WTC11 (cell line): ENCODE measurements at regions of chr5 and their contacts with region 1.

Region 1: GRCh38 chr5:172714491-172715421 is 56.2 kb downstream of the DUSP1 start:
- DNase-seq: peak; percentile 85
- ATAC-seq: peak; percentile 80
- H3K4me3 Mint-ChIP-seq: no peak overlapping the region
- H3K27ac Mint-ChIP-seq: no peak overlapping the region
- H3K4me1 Mint-ChIP-seq: peaks cover 2% of the 10 kb centered on the region; the same call in 1 of the 2 replicates
- H3K27me3 Mint-ChIP-seq: peaks cover 13% of the 10 kb centered on the region
- CTCF ChIP-seq: peak; percentile 87

Region 2: GRCh38 chr5:172697123-172698121 is 17.3 kb before region 1 on chr5:
- CTCF ChIA-PET with region 1: interaction called, 28 read pairs
- POLR2A ChIA-PET with region 1: interaction called, 3 read pairs
- DNase-seq: peak; percentile 89
- ATAC-seq: peak; percentile 60
- H3K4me3 Mint-ChIP-seq: peak overlapping the region; percentile 66
- H3K27ac Mint-ChIP-seq: no peak overlapping the region
- H3K4me1 Mint-ChIP-seq: peaks cover 47% of the 10 kb centered on the region
- H3K27me3 Mint-ChIP-seq: peaks cover 32% of the 10 kb centered on the region
- CTCF ChIP-seq: peak; percentile 85

Region 3: GRCh38 chr5:172733131-172733973 is 18.6 kb after region 1 on chr5:
- CTCF ChIA-PET with region 1: interaction called, 10 read pairs
- POLR2A ChIA-PET with region 1: no interaction called
- DNase-seq: no peak
- ATAC-seq: peak; percentile 33
- H3K4me3 Mint-ChIP-seq: no peak overlapping the region
- H3K27ac Mint-ChIP-seq: no peak overlapping the region
- H3K4me1 Mint-ChIP-seq: no peaks in the 10 kb centered on the region
- H3K27me3 Mint-ChIP-seq: peaks cover 9% of the 10 kb centered on the region; the same call in 1 of the 2 replicates
- CTCF ChIP-seq: no peak

Region 4: DNA sequence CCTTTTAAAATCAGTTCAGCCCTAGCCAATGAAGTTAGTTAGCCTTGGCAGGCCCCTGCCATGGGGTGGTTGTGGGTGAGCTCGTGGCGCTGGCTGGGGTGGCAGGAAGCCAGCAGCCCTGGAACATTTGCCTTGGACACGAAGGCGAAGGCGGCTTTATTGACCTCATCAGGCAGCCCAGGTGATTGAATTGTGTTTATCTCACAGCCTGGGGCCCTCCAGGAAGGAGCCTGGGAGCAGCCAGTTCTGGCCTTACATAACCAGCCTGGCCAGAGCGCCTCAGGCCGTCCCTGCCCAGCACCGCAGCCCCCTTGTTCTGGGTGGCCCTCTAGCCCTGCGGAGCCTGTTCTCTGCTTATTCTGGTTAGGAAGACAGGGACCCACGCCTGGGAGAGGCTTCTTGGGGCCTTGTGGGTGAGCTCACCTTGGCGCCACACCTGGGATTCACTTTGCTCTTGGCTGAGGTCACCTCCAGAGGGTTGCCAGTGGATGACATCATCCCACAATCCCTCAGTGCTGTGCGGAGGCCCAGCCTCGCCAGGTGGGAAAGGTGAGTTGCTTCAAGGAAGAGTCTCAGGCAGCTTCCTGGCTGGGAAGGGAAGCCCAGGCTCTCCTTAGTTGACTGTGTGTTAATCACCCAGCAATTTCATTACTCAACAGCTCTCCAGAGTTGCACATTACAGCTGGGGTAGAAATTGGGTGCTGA is 190.0 kb after region 1 on chr5:
- CTCF ChIA-PET with region 1: interaction called, 22 read pairs
- POLR2A ChIA-PET with region 1: no interaction called
- DNase-seq: no peak
- ATAC-seq: no peak
- H3K4me3 Mint-ChIP-seq: no peak overlapping the region
- H3K27ac Mint-ChIP-seq: peak overlapping the region; percentile 82
- H3K4me1 Mint-ChIP-seq: peaks cover 21% of the 10 kb centered on the region
- H3K27me3 Mint-ChIP-seq: no peaks in the 10 kb centered on the region
- CTCF ChIP-seq: no peak

Region 5: DNA sequence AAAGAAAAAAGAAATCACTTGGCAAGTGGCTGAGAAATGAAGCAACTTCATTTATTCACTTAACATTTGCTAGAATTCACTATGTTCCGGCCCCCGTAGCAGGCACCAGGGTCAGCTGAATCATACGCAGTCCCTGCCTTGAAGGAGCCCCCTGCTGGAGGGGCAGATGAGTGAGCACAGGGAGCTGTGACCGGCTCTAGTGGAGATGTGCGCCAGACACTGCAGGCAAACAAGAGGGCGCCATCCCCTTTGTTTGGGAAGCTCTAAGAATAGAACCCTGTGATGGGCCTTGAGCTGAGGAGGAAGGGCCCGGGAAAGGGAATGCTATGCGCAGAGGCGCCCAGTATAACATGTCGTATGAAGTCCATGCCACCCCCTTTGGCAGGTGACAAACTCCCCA is 224.3 kb after region 1 on chr5:
- CTCF ChIA-PET with region 1: interaction called, 50 read pairs
- POLR2A ChIA-PET with region 1: interaction called, 3 read pairs
- DNase-seq: peak; percentile 74
- ATAC-seq: peak; percentile 82
- H3K4me3 Mint-ChIP-seq: no peak overlapping the region
- H3K27ac Mint-ChIP-seq: no peak overlapping the region
- H3K4me1 Mint-ChIP-seq: peaks cover 15% of the 10 kb centered on the region
- H3K27me3 Mint-ChIP-seq: no peaks in the 10 kb centered on the region
- CTCF ChIP-seq: peak; percentile 46